ENCODE measurements at regions of chr11 and their contacts with region 1.

Region 1: GRCh38 chr11:109956124-109956793 is 136.9 kb upstream of the ZC3H12C start:
- DNase-seq: no peak
- H3K4me3 ChIP-seq: no peak overlapping the region
- H3K27ac ChIP-seq: no peak overlapping the region
- H3K4me1 ChIP-seq: peaks cover 4% of the 10 kb centered on the region
- H3K27me3 ChIP-seq: no peaks in the 10 kb centered on the region
- CTCF ChIP-seq: no peak
- EP300 ChIP-seq: no peak
- POLR2A ChIP-seq: no peak

Region 2: GRCh38 chr11:109911488-109911887 is 44.8 kb before region 1 on chr11:
- intact Hi-C with region 1: no loop called
- DNase-seq: no peak
- H3K4me3 ChIP-seq: no peak overlapping the region
- H3K27ac ChIP-seq: no peak overlapping the region
- H3K4me1 ChIP-seq: no peaks in the 10 kb centered on the region
- H3K27me3 ChIP-seq: no peaks in the 10 kb centered on the region
- CTCF ChIP-seq: no peak
- EP300 ChIP-seq: no peak
- POLR2A ChIP-seq: no peak

Region 3: DNA sequence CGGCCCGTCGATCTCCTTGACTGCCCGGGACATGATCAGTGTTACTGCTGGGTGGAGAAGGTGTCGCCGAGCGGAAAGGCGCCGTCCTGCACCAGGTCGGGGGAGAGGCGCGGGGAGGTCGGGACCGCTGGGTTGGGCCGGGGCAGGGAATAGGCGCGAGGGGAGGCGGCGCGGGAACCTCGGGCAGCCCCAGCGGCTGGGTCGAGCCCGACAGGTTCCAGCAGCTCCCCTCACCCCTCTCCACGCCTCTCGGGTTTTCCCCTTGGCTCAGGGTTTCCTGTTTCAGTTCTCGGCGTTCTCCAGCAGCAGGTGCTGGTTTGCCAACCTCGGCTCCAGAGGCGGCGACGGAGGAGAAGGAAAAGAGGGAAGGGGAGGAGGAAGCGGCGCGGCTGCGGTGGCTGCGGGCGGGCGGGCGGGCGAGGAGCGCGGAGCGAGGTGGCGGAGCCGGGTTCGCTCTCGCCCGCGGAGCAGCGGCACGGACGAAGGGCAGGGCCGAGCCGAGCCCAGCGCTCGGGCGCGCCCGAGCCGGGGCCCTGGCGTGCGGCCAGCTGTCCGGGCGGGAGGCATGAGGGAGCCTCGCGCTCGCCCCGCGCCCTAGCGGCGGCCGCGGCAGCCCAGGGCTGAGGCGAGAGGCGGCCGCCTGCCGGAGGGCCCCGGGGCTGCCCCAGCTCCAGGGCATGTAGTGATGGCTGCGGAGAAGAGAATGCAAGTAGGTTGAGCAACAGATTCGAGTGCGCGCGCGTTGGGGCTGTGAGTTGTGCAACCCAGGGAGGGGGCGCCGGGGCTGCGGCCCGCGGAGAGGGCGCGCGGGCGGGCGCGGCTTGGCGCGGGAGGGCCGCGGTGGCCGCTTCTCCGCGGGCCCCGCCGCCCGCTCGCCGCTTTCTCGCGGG is 136.5 kb after region 1 on chr11 and contains the start of gene ZC3H12C:
- intact Hi-C with region 1: loop called in 1 of 4 experiments (anchors 10 kb)
- DNase-seq: peak; percentile 82 to 91 (median 85)
- H3K4me3 ChIP-seq: peak within 1 kb of the TSS; percentile 86
- H3K27ac ChIP-seq: peak within 1 kb of the TSS; percentile 98 to 99
- H3K4me1 ChIP-seq: peaks cover 2% of the 10 kb centered on the region
- H3K27me3 ChIP-seq: no peaks in the 10 kb centered on the region
- CTCF ChIP-seq: peak; percentile 11 to 81 (median 70)
- EP300 ChIP-seq: no peak
- POLR2A ChIP-seq: peak; percentile 72
- total RNA-seq, gene ZC3H12C: 10.2 to 21.0 (median 17.7) TPM

Measured in ovary (tissue), 10 donors.